GM10248 (cell line): ENCODE measurements at regions of chr4 and their contacts with region 1.

Region 1: DNA sequence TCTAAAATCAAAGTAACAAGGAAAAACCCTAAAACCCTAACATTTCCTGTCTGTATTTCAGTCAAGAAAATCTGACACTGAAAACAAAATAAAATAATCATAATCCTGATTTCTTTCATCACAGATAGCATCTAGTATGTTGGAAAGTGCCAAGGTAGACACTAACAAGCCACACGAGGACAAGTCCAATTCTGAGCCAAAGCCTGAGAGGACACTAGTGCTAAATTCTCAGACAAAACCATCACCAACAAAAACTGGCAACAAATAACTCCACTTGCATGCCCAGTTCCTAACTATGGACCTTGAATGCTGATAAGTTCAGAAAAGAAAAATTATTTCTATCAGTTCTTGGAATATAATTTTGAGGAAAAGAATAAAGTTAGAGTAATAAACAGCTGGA is 113.7 kb downstream of the MANBA start:
- DNase-seq: no peak
- CTCF ChIP-seq: no peak

Region 2: GRCh38 chr4:102610007-102610406 is 37.1 kb before region 1 on chr4:
- CTCF ChIA-PET with region 1: no interaction called
- POLR2A ChIA-PET with region 1: no interaction called
- DNase-seq: no peak
- CTCF ChIP-seq: peak; percentile 40

Region 3: DNA sequence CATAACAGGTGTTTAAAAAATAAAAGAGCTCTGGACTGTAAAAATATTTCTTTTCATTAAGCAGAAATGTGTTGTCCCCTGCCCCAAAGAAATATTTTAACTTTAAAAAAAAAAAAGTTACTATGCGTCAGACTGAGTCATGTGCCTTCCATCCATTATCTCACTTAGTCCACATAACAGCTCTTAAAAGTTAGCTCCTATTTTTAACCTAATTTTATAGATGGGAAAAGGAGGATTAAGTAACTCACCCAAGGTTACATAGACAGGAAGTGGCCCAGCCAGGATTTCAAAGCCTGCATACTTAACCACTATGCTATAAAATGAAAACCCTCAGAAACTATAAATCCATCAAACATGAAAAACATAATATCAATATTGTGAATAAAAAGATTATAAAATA is 16.0 kb after region 1 on chr4:
- CTCF ChIA-PET with region 1: interaction called, 11 read pairs
- POLR2A ChIA-PET with region 1: no interaction called
- DNase-seq: no peak
- CTCF ChIP-seq: no peak